Common myeloid progenitor, CD34-positive (primary cell): ENCODE measurements at regions of chr16 and their contacts with region 1.

Region 1: DNA sequence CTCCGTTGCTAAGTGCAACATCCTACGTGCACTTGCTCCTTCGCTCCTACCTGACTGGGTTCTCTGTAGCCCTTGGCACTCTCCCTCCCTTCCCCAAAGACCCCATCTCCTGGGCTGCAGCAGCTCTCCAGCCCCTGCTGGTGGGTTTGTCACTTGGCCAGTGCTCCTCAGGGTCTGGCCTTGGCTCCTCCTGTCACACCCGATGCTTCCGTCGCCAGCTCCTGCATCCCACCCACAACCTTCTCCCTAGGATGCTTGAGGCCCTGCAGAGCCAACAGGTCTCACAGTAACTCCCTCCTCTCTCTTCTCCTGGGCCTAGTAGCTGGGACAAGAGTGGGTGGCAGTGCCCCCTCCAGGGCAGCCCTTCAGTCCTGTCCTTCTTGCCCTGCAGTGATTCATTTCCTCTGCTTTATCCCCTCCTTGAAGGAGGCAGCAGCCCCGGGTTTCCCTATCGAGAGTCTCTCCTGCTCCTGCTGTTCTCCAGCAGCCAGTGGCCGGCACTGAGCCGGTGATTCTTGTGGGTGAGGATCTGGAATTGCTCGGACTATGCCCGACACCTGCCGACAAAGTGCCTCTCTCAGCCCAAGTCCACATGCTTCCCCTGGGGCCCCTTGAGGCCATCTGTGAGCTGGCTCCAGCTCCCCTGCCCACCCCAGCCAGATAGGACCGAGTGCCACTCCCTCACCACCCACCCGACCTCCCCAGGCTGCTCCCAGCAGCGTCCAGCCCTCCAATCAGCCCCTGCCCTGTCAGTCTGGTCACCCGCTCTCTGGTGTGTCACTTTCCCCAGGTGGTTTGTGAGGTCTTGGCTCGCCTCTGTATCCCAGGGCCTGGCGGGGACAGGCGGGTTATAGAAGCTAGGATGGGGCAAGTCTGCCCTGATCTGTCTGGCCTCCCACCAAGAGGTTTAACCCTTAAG is 3.8 kb downstream of the LITAFD start:
- DNase-seq: no peak
- H3K4me3 ChIP-seq: no peak overlapping the region
- H3K27ac ChIP-seq: no peak overlapping the region
- H3K4me1 ChIP-seq: no peaks in the 10 kb centered on the region
- H3K27me3 ChIP-seq: peaks cover 0 to 24% (median 6%) of the 10 kb centered on the region in 5 experiments

Region 2: DNA sequence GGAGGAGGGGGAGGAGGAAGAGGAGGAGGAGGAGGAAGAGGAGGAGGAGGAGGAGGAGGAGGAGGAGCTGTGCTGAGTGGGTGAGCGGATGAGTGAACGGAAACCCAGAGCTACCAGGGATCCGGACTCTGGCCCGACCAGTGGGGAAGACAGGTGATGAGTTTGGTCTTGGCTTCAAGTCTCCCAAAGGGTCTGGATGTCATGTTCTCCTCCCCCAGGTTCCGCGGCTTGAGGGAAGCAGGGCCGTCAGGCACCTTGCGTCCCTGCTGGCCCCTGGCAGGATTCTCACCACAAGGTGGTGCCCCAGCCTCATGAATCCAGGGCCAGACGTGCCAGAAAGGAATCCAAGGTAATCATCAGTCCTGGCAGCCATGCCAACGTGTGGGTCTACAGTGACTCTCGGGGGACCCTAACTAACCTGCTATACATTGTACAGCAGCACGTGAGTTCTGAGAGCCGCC is 225.1 kb before region 1 on chr16:
- CTCF ChIA-PET with region 1: interaction called, 85 read pairs
- POLR2A ChIA-PET with region 1: no interaction called
- DNase-seq: peak; percentile 36 to 61 (median 60)
- H3K4me3 ChIP-seq: no peak overlapping the region
- H3K27ac ChIP-seq: no peak overlapping the region
- H3K4me1 ChIP-seq: no peaks in the 10 kb centered on the region
- H3K27me3 ChIP-seq: no peaks in the 10 kb centered on the region

Region 3: GRCh38 chr16:8760021-8760420 is 125.9 kb before region 1 on chr16:
- CTCF ChIA-PET with region 1: no interaction called
- POLR2A ChIA-PET with region 1: no interaction called
- DNase-seq: no peak
- H3K4me3 ChIP-seq: no peak overlapping the region
- H3K27ac ChIP-seq: no peak overlapping the region
- H3K4me1 ChIP-seq: no peaks in the 10 kb centered on the region
- H3K27me3 ChIP-seq: no peaks in the 10 kb centered on the region